ENCODE measurements at regions of chrX and their contacts with region 1.

Region 1: DNA sequence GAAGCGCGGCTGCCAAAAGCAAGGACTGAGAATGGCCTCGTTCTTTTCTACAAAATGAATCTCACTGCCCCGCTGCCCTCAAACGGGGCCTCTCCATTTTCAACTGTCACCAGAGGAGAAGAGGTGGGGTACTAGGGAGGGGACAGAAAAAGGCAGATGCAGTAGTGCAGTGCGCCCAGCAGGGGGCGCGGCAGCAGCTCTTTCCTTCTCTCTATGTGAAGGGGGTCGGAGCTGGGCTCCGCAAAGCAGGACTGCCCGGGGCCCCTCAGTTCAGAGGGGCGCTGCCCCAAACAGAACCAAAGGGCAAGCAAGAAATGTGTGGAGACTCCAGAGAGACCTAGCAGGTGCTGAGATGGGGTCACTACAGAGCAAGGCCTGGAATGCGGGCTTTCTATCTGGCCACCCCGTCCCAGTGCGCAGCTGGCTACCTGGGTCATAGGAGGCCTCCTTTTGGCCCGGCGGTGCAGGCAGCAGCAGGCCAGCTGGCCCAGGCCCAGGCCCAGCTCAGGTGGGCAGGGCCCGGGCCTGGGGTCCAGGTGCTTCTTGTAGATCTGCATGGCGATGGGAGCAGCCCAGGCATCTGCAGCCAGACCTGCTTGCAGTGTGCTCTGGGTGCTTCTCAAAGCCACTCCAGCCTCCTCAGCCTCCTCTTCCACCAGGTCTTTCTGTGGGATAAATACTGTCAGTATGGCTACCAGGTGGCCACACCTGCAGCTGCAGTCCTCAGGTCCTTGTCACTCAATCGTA is 5.9 kb downstream of the IRAK1 start:
- DNase-seq: peak; percentile 67
- ATAC-seq: peak; percentile 85
- H3K4me3 Mint-ChIP-seq: no peak overlapping the region
- H3K27ac Mint-ChIP-seq: peak overlapping the region; percentile 13
- H3K4me1 Mint-ChIP-seq: peaks cover 7% of the 10 kb centered on the region
- H3K27me3 Mint-ChIP-seq: no peaks in the 10 kb centered on the region

Region 2: GRCh38 chrX:153947009-153947769 is 66.6 kb before region 1 on chrX:
- CTCF ChIA-PET with region 1: no interaction called
- POLR2A ChIA-PET with region 1: no interaction called
- intact Hi-C with region 1: no loop called
- DNase-seq: peak; percentile 89
- ATAC-seq: peak; percentile 87
- H3K4me3 Mint-ChIP-seq: no peak overlapping the region
- H3K27ac Mint-ChIP-seq: peak overlapping the region; percentile 87
- H3K4me1 Mint-ChIP-seq: peaks cover 14% of the 10 kb centered on the region
- H3K27me3 Mint-ChIP-seq: no peaks in the 10 kb centered on the region

Region 3: DNA sequence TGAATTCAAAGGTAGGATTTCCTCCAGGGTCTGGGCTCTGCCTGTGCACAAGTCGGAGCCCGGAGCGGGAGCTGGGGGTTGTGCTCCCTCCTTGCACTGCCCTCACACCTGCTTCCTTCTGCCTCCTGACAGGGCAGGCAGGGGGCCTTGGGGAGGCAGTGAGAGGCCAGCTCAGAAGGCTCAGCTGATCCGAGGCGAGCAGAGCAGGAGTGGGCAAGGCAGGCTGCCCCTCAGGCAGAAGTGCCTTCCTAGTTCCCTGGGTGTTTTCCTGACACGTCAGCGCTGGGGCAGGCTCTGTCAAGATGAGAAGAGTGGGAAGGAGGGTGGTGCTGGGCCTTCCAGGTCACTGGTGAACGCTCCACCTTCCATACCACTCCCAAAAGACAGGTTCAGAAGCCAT is 11.4 kb after region 1 on chrX:
- CTCF ChIA-PET with region 1: interaction called, 10 read pairs
- POLR2A ChIA-PET with region 1: no interaction called
- intact Hi-C with region 1: no loop called
- DNase-seq: no peak
- ATAC-seq: no peak
- H3K4me3 Mint-ChIP-seq: no peak overlapping the region
- H3K27ac Mint-ChIP-seq: no peak overlapping the region
- H3K4me1 Mint-ChIP-seq: peaks cover 9% of the 10 kb centered on the region
- H3K27me3 Mint-ChIP-seq: no peaks in the 10 kb centered on the region

Region 4: DNA sequence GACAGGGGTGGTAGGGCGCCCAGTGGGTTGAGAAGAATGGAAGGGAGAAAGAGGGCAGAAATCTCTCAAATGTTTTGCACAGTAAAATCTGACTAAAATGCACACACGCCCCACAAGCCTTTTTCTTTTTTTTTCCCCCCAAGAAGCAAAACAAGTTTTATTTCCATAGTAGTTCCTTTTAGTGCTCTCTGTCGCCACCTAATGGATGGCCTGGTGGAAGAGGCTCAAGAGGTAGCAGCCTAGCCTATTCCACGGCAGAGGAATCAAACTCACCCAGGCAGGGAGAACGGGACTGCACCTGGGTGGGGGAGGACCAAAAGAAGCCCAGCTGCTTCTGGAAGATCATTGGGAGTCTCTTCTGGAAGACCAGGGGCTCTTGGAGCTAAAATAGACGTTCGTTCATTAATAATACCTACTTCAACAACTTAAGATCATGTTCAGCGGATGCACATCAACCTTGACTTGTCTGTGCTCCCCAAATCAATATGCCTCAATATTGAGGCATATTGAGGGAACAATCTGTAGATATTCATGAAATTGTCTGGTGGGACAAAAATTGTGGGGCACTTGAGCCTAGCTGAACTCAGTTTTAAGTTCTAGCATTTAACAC is 37.5 kb after region 1 on chrX:
- CTCF ChIA-PET with region 1: interaction called, 5 read pairs
- POLR2A ChIA-PET with region 1: no interaction called
- intact Hi-C with region 1: loop called (anchors 1 kb)
- DNase-seq: peak; percentile 81
- ATAC-seq: peak; percentile 85
- H3K4me3 Mint-ChIP-seq: no peak overlapping the region
- H3K27ac Mint-ChIP-seq: peak overlapping the region; percentile 40
- H3K4me1 Mint-ChIP-seq: peaks cover 33% of the 10 kb centered on the region
- H3K27me3 Mint-ChIP-seq: no peaks in the 10 kb centered on the region

Region 5: GRCh38 chrX:154397819-154398724 is 384.3 kb after region 1 on chrX and contains the start of gene RPL10:
- CTCF ChIA-PET with region 1: no interaction called
- POLR2A ChIA-PET with region 1: no interaction called
- intact Hi-C with region 1: no loop called
- DNase-seq: peak; percentile 94
- ATAC-seq: peak; percentile 80
- H3K4me3 Mint-ChIP-seq: peak within 1 kb of the TSS; percentile 99
- H3K27ac Mint-ChIP-seq: peak within 1 kb of the TSS; percentile 100
- H3K4me1 Mint-ChIP-seq: no peaks in the 10 kb centered on the region
- H3K27me3 Mint-ChIP-seq: no peaks in the 10 kb centered on the region
- total RNA-seq, gene RPL10: 1,286 to 2,705 TPM